GM10248 (cell line): ENCODE measurements at regions of chr17 and their contacts with region 1.

Region 1: GRCh38 chr17:44110823-44111633 is 12.4 kb downstream of the HDAC5 start:
- DNase-seq: peak; percentile 87
- CTCF ChIP-seq: no peak

Region 2: DNA sequence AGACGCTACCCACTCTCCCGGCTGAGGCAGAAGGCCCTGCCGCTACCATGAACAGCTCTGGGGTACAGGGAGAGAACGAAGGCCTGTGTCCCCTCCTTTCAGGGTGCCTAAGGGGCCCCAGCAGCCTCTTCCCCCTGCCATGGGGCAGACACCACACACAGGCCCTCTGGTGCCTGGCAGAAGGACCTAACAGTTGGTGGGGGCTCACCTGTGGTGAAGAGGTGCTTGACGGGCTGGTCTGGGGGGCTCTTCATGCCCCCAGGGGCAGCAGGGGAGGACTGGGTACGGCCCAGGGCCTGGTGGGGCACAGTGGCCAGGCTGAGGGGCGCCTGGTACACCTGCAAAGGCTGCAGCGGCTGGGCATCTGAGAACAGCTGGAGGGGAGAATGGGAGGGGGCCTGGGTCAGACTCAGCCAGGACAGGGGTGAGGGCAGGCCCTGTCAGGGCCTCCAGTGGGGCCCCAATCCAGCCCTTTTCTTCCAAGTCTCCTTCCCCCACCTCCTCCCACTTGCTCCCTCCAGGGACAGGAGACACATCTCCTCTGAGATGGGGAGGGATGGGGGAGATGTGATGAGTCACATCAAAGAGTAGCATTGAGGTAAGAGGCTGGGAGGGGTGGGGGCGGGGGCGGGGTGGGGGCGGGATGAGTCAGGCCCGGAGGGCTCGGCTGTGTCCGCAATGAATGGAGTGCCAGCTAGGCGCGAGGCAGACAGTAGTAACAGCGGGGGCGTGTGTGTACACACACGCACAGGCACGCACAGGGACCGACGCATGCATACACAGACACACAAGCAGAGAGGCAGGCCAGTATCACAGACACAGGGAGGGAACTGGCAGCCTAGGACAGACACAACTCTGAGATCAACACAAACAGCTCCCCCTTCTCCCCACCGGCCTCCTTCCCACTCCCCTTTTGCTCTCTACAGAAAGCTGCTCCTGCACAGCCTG is 24.4 kb before region 1 on chr17:
- CTCF ChIA-PET with region 1: interaction called, 16 read pairs
- POLR2A ChIA-PET with region 1: no interaction called
- DNase-seq: no peak
- CTCF ChIP-seq: no peak

Region 3: GRCh38 chr17:44123356-44124117 is 12.5 kb after region 1 on chr17 and contains the start of gene HDAC5:
- CTCF ChIA-PET with region 1: interaction called, 8 read pairs
- POLR2A ChIA-PET with region 1: interaction called, 18 read pairs
- DNase-seq: peak; percentile 97
- CTCF ChIP-seq: peak; percentile 72